ENCODE measurements at regions of chr6 and their contacts with region 1.

Region 1: GRCh38 chr6:142387997-142388815 is 86.4 kb downstream of the ADGRG6 start:
- DNase-seq: peak in 2 of 9 experiments; percentile 30 to 54
- ATAC-seq: peak; percentile 57
- H3K4me3 ChIP-seq: no peak overlapping the region
- H3K4me3 Mint-ChIP-seq: no peak overlapping the region
- H3K27ac ChIP-seq: no peak overlapping the region
- H3K27ac Mint-ChIP-seq: no peak overlapping the region
- H3K4me1 ChIP-seq: peaks cover 12% of the 10 kb centered on the region
- H3K4me1 Mint-ChIP-seq: peaks cover 12% of the 10 kb centered on the region
- H3K27me3 ChIP-seq: no peaks in the 10 kb centered on the region
- H3K27me3 Mint-ChIP-seq: peaks cover 4% of the 10 kb centered on the region
- CTCF ChIP-seq: peak; percentile 65

Region 2: DNA sequence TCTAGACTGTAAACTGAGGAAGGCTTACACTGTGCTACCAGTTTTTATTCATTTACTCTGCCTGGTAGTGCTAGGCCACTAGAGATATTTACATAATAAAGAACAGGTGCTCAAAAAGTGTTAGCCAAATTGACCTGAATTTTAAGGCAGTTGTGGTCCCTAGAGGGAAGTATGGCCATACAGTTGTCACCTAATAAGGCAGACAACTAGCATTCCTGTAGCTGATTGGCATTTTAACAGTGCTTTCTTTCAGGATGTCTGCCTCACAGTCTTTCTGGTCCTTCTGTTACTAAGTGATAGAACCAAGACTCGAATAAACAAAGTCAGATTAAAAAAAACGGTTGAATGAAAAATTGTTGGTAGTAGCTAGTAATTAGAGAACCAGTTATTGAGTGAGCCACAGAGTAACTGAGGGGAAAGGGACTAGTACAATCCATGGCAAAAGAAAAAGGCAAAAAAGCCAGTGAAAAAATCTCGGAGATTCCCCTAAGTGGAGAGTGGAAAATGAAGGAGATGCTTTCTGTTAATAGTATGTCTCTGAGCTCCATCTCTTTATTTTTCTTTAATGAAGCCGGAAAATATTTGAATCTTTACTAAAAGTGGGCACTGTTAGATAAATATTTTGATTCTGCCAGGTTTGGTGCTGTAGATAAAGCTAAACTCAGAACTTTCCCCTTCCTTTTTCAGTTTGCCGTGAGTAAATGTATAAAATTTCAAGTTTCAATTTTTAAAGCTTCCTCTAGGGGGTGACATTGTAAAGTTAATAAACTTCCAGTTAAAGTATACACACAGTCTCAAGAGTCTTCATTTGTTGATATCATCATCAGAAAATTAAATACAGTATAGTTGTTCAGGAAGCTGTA is 232.1 kb before region 1 on chr6:
- CTCF ChIA-PET with region 1: interaction called, 9 read pairs
- POLR2A ChIA-PET with region 1: no interaction called
- intact Hi-C with region 1: loop called in 1 of 2 experiments (anchors 2 kb)
- DNase-seq: peak in 2 of 9 experiments; percentile 19 to 44
- ATAC-seq: peak; percentile 76
- H3K4me3 ChIP-seq: no peak overlapping the region
- H3K4me3 Mint-ChIP-seq: no peak overlapping the region
- H3K27ac ChIP-seq: no peak overlapping the region
- H3K27ac Mint-ChIP-seq: peak overlapping the region; percentile 39
- H3K4me1 ChIP-seq: peaks cover 8% of the 10 kb centered on the region
- H3K4me1 Mint-ChIP-seq: peaks cover 69% of the 10 kb centered on the region
- H3K27me3 ChIP-seq: no peaks in the 10 kb centered on the region
- H3K27me3 Mint-ChIP-seq: no peaks in the 10 kb centered on the region
- CTCF ChIP-seq: peak; percentile 83

Region 3: DNA sequence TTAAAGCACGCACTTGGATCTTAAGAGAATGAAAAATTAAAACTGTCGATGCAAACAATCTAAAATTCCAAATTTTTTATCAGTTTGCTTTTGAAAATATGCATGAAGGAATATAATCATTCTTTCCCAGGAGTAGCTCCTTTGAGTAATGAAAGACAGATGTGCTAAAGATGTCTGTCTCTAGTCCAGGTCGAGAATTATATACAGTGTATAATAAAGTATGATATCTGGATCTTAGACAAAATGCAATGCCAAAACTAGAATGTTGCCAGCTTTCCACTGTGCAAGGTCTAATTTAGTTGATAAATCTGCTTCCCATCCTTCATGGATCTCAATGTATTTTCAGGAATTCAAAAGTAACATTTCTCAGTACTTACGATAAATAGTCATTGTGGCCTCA is 151.5 kb before region 1 on chr6:
- CTCF ChIA-PET with region 1: interaction called, 7 read pairs
- POLR2A ChIA-PET with region 1: interaction called, 4 read pairs
- intact Hi-C with region 1: loop called (anchors 2 kb)
- DNase-seq: no peak
- ATAC-seq: no peak
- H3K4me3 ChIP-seq: no peak overlapping the region
- H3K4me3 Mint-ChIP-seq: no peak overlapping the region
- H3K27ac ChIP-seq: no peak overlapping the region
- H3K27ac Mint-ChIP-seq: no peak overlapping the region
- H3K4me1 ChIP-seq: peaks cover 15% of the 10 kb centered on the region
- H3K4me1 Mint-ChIP-seq: peaks cover 18% of the 10 kb centered on the region
- H3K27me3 ChIP-seq: no peaks in the 10 kb centered on the region
- H3K27me3 Mint-ChIP-seq: peaks cover 4% of the 10 kb centered on the region
- CTCF ChIP-seq: no peak

Region 4: DNA sequence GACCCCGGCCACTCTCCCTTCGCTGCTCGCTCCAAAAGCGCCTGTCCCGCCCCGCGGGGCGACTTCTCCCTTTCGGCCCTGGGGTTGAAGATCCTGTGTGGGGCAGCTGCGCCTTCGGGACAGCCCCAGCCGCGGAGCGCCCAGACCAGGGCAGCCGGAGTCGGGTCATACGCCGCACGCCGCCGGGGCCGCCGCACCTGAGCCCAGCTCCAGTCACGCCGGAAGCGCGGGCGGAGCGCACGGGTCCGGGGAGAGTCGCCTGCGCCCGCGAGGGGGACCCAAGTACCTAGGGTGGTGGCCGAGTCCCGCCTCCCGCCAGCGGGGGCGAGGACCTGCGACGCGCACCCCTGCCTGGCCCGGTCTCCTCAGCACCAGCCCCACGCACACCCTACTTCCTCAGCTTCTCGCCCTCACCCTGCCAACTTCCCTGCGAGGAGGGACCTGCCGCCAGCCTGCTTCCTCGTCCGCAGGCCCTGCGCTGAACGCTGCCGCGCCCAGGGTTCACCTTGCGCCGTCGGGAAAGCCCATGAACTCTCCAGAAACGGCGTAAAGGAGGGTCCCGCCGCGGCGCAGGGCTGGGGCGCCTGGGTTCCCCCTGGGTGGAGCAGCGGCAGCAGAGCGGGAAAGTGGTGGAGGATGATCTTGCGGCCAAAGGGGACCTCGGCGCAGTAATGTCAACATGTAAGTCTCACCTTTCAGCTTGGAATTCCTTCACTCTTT is 86.4 kb before region 1 on chr6 and contains the start of gene ADGRG6:
- CTCF ChIA-PET with region 1: no interaction called
- POLR2A ChIA-PET with region 1: interaction called, 4 read pairs
- intact Hi-C with region 1: loop called in 1 of 2 experiments (anchors 1 kb)
- DNase-seq: peak in 8 of 9 experiments; percentile 4 to 69 (median 38)
- ATAC-seq: peak; percentile 70
- H3K4me3 ChIP-seq: peak within 1 kb of the TSS; percentile 42 to 61
- H3K4me3 Mint-ChIP-seq: peak within 1 kb of the TSS; percentile 85
- H3K27ac ChIP-seq: no peak within 1 kb of the TSS
- H3K27ac Mint-ChIP-seq: peak within 1 kb of the TSS; percentile 66
- H3K4me1 ChIP-seq: peaks cover 4% of the 10 kb centered on the region
- H3K4me1 Mint-ChIP-seq: peaks cover 15% of the 10 kb centered on the region
- H3K27me3 ChIP-seq: no peaks in the 10 kb centered on the region
- H3K27me3 Mint-ChIP-seq: peaks cover 15% of the 10 kb centered on the region
- CTCF ChIP-seq: no peak
- total RNA-seq, gene ADGRG6: 0.54 to 0.61 TPM

Region 5: GRCh38 chr6:142356201-142356883 is 31.9 kb before region 1 on chr6:
- CTCF ChIA-PET with region 1: interaction called, 5 read pairs
- POLR2A ChIA-PET with region 1: no interaction called
- intact Hi-C with region 1: loop called in 1 of 2 experiments (anchors 5 kb)
- DNase-seq: peak in 1 of 9 experiments; percentile 4
- ATAC-seq: peak; percentile 17
- H3K4me3 ChIP-seq: no peak overlapping the region
- H3K4me3 Mint-ChIP-seq: no peak overlapping the region
- H3K27ac ChIP-seq: no peak overlapping the region
- H3K27ac Mint-ChIP-seq: peak overlapping the region; percentile 92
- H3K4me1 ChIP-seq: peaks cover 17% of the 10 kb centered on the region
- H3K4me1 Mint-ChIP-seq: peaks cover 20% of the 10 kb centered on the region
- H3K27me3 ChIP-seq: no peaks in the 10 kb centered on the region
- H3K27me3 Mint-ChIP-seq: peaks cover 1% of the 10 kb centered on the region
- CTCF ChIP-seq: no peak

Region 6: DNA sequence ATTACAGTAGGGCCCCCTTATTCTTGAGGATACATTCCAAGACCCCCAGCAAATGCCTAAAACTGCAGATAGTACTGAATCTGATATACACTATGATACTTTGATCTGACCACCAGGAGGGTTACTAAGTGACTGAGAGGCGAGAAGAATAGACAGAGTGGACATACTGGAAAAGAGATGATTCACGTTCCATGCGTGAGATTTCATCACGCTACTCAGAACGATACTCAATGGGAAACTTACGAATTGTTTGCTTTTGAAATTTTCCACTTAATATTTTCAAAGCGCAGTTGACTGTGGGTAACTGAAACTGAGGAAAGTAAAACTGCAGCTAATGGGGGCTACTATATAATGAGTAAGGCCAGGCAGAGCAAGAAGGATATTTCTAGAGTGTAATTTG is 1823.0 kb after region 1 on chr6:
- CTCF ChIA-PET with region 1: no interaction called
- POLR2A ChIA-PET with region 1: no interaction called
- intact Hi-C with region 1: no loop called
- DNase-seq: no peak
- ATAC-seq: no peak
- H3K4me3 ChIP-seq: no peak overlapping the region
- H3K4me3 Mint-ChIP-seq: no peak overlapping the region
- H3K27ac ChIP-seq: no peak overlapping the region
- H3K27ac Mint-ChIP-seq: no peak overlapping the region
- H3K4me1 ChIP-seq: peaks cover 11% of the 10 kb centered on the region
- H3K4me1 Mint-ChIP-seq: peaks cover 12% of the 10 kb centered on the region
- H3K27me3 ChIP-seq: peaks cover 0 to 5% of the 10 kb centered on the region in 2 experiments
- H3K27me3 Mint-ChIP-seq: peaks cover 13% of the 10 kb centered on the region
- CTCF ChIP-seq: no peak

Measured in CD8-positive, alpha-beta T cell (primary cell).